ENCODE measurements at regions of chr7 and their contacts with region 1.

Region 1: DNA sequence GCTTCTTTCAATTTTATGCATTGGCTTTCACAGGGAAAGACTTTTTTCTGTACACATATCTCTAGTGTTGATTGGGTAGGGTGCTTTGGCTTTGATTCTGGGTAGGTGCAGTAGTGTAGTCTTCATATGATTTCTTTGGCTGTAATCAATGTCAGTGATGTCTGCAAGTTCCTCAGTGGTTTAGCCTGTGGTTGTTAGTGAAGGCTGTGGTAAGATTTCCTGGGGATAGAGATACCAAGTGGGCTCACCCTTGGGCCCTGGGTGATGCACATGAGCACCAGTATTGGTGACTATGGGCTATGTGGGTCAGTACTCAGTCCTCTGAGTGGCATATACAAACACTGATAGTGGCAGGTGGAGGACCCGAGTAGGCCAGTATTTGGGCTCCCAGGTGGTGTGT is 13.0 kb downstream of the GIMAP8 start:
- DNase-seq: no peak
- ATAC-seq: peak; percentile 26 to 57 (median 33)
- H3K4me3 ChIP-seq: no peak overlapping the region
- H3K4me3 Mint-ChIP-seq: peak overlapping the region; percentile 46
- H3K27ac ChIP-seq: peak overlapping the region; percentile 31
- H3K27ac Mint-ChIP-seq: peak overlapping the region; percentile 76 to 78
- H3K4me1 ChIP-seq: peaks cover 27% of the 10 kb centered on the region
- H3K4me1 Mint-ChIP-seq: peaks cover 70 to 77% of the 10 kb centered on the region in 2 donors
- H3K27me3 ChIP-seq: no peaks in the 10 kb centered on the region
- H3K27me3 Mint-ChIP-seq: no peaks in the 10 kb centered on the region
- CTCF ChIP-seq: no peak

Region 2: GRCh38 chr7:149873074-149873969 is 590.1 kb before region 1 on chr7 and contains the start of gene ATP6V0E2:
- intact Hi-C with region 1: no loop called
- DNase-seq: peak; percentile 86 to 95
- ATAC-seq: peak; percentile 87 to 89 (median 88)
- H3K4me3 ChIP-seq: peak within 1 kb of the TSS; percentile 48
- H3K4me3 Mint-ChIP-seq: peak within 1 kb of the TSS; percentile 92
- H3K27ac ChIP-seq: peak within 1 kb of the TSS; percentile 23
- H3K27ac Mint-ChIP-seq: peak within 1 kb of the TSS; percentile 19 to 82
- H3K4me1 ChIP-seq: peaks cover 55% of the 10 kb centered on the region
- H3K4me1 Mint-ChIP-seq: peaks cover 50 to 59% of the 10 kb centered on the region in 2 donors
- H3K27me3 ChIP-seq: no peaks in the 10 kb centered on the region
- H3K27me3 Mint-ChIP-seq: no peaks in the 10 kb centered on the region
- CTCF ChIP-seq: no peak
- total RNA-seq, gene ATP6V0E2: 23.2 to 39.4 (median 34.9) TPM

Region 3: GRCh38 chr7:150340024-150340749 is 123.3 kb before region 1 on chr7:
- intact Hi-C with region 1: no loop called
- DNase-seq: peak in 1 of 2 donors; percentile 20
- ATAC-seq: peak in 1 of 3 donors; percentile 36
- H3K4me3 ChIP-seq: no peak overlapping the region
- H3K4me3 Mint-ChIP-seq: no peak overlapping the region
- H3K27ac ChIP-seq: no peak overlapping the region
- H3K27ac Mint-ChIP-seq: no peak overlapping the region
- H3K4me1 ChIP-seq: peaks cover 12% of the 10 kb centered on the region
- H3K4me1 Mint-ChIP-seq: peaks cover 0 to 11% of the 10 kb centered on the region in 2 donors
- H3K27me3 ChIP-seq: peaks cover 20% of the 10 kb centered on the region
- H3K27me3 Mint-ChIP-seq: peaks cover 24 to 32% of the 10 kb centered on the region in 2 donors
- CTCF ChIP-seq: no peak

Region 4: GRCh38 chr7:150507947-150508602 is 44.6 kb after region 1 on chr7:
- intact Hi-C with region 1: loop called (anchors 5 kb)
- DNase-seq: peak in 1 of 2 donors; percentile 47
- ATAC-seq: peak in 2 of 3 donors; percentile 24 to 34
- H3K4me3 ChIP-seq: no peak overlapping the region
- H3K4me3 Mint-ChIP-seq: peak overlapping the region; percentile 77
- H3K27ac ChIP-seq: peak overlapping the region; percentile 58
- H3K27ac Mint-ChIP-seq: peak overlapping the region; percentile 94 to 96
- H3K4me1 ChIP-seq: peaks cover 62% of the 10 kb centered on the region
- H3K4me1 Mint-ChIP-seq: peaks cover 91 to 93% of the 10 kb centered on the region in 2 donors
- H3K27me3 ChIP-seq: no peaks in the 10 kb centered on the region
- H3K27me3 Mint-ChIP-seq: no peaks in the 10 kb centered on the region
- CTCF ChIP-seq: no peak

Region 5: GRCh38 chr7:150556521-150557138 is 93.2 kb after region 1 on chr7:
- intact Hi-C with region 1: no loop called
- DNase-seq: peak in 1 of 2 donors; percentile 79
- ATAC-seq: peak; percentile 97 to 99 (median 98)
- H3K4me3 ChIP-seq: no peak overlapping the region
- H3K4me3 Mint-ChIP-seq: peak overlapping the region; percentile 85
- H3K27ac ChIP-seq: peak overlapping the region; percentile 89
- H3K27ac Mint-ChIP-seq: peak overlapping the region; percentile 89 to 95
- H3K4me1 ChIP-seq: peaks cover 12% of the 10 kb centered on the region
- H3K4me1 Mint-ChIP-seq: peaks cover 50 to 63% of the 10 kb centered on the region in 2 donors
- H3K27me3 ChIP-seq: no peaks in the 10 kb centered on the region
- H3K27me3 Mint-ChIP-seq: no peaks in the 10 kb centered on the region
- CTCF ChIP-seq: no peak